ENCODE measurements at regions of chr3 and their contacts with region 1.

Region 1: DNA sequence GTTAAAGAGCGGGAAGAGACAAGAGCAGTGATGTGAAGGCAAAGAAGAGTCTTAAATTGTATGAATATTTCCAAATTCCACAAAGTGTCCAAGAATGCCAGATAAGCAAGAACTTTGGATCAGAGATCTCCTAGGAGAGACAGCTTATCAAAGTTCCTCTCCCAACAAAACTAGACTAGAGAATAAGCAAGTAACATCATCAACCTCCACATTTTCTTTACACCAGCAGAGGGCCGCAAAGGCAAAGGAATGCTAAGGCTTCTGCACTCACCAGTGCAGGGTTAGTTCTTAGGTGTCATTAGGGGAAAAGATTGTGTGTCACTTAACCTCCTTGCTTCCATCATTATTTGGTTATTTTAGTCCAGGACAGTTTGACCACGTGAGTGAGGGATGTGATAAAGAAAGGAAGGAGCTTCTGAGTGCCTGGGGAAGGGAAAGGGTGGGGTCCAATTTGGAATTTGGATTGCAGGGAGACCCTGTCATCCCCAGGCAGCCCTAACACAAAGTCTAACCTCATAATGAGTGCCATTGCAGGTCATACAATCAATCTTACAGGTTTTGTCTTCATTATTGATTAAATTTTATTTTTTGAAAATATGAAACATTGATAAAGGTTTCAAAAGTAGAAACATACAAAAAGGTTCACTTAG is 7.5 kb upstream of the CMTM6 start:
- DNase-seq: peak in 3 of 6 donors; percentile 28 to 71 (median 57)
- ATAC-seq: peak; percentile 80 to 98 (median 97)
- H3K4me3 ChIP-seq: no peak overlapping the region
- H3K27ac ChIP-seq: no peak overlapping the region
- H3K4me1 ChIP-seq: no peaks in the 10 kb centered on the region
- H3K27me3 ChIP-seq: no peaks in the 10 kb centered on the region
- CTCF ChIP-seq: peak in 3 of 4 donors; percentile 46 to 51 (median 48)

Region 2: GRCh38 chr3:31985831-31986230 is 524.4 kb before region 1 on chr3:
- intact Hi-C with region 1: no loop called
- DNase-seq: no peak
- ATAC-seq: no peak
- H3K4me3 ChIP-seq: no peak overlapping the region
- H3K27ac ChIP-seq: no peak overlapping the region
- H3K4me1 ChIP-seq: no peaks in the 10 kb centered on the region
- H3K27me3 ChIP-seq: no peaks in the 10 kb centered on the region
- CTCF ChIP-seq: no peak

Region 3: DNA sequence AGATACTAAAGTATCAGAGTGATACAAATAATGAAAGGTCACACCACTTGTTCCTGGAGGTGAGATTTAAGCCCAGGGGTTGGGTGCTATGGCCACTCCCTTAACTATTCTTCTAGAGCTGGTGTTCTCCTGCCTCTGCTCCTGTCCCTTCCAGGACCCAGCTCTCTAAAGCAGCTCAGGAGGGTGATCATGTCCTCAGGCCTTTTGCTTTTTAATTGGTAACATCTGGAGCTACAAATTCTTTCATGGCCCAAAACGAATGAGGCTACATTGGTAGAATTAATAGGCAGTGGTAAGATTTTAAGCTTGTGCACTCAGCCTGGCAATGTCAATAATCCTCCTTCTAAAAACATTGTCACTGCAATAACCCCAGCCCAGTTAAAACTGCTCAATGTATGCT is 136.6 kb after region 1 on chr3:
- intact Hi-C with region 1: no loop called
- DNase-seq: no peak
- ATAC-seq: no peak
- H3K4me3 ChIP-seq: no peak overlapping the region
- H3K27ac ChIP-seq: no peak overlapping the region
- H3K4me1 ChIP-seq: no peaks in the 10 kb centered on the region
- H3K27me3 ChIP-seq: no peaks in the 10 kb centered on the region
- CTCF ChIP-seq: no peak

Region 4: GRCh38 chr3:32667122-32667521 is 156.9 kb after region 1 on chr3:
- intact Hi-C with region 1: loop called in 2 of 3 experiments (anchors 5 kb)
- DNase-seq: no peak
- ATAC-seq: no peak
- H3K4me3 ChIP-seq: no peak overlapping the region
- H3K27ac ChIP-seq: no peak overlapping the region
- H3K4me1 ChIP-seq: no peaks in the 10 kb centered on the region
- H3K27me3 ChIP-seq: no peaks in the 10 kb centered on the region
- CTCF ChIP-seq: no peak